Mucosa of descending colon (tissue), 3 donors: ENCODE measurements at regions of chr1 and their contacts with region 1.

Region 1: DNA sequence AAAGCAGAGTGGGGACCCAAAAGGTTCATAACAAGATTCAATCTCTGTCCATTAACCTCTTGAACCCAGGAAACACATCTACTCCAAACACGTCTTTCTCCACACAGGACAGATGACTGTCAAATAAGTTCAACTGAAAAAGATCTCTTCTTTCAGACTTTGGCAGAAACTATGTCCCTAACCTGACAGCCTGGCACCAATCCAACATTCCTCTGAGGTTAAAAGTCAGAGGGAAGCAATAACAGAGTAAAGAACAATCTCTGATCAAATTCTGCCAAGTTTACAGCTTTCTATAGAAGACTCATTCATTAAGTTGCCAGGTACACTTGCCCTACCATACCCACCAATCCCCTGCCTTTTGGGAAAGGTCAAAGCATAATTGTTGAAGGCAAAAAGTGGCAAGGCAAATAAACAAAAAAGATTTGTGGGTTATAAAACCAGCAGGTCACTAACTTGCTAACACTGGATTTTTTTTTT is 31.9 kb downstream of the OTUD7B start:
- DNase-seq: peak in 1 of 3 donors; percentile 54
- ATAC-seq: peak; percentile 53
- H3K4me3 ChIP-seq: no peak overlapping the region
- H3K4me1 ChIP-seq: peaks cover 26% of the 10 kb centered on the region
- CTCF ChIP-seq: no peak

Region 2: GRCh38 chr1:150034336-150034735 is 55.8 kb after region 1 on chr1:
- intact Hi-C with region 1: loop called in 1 of 2 experiments (anchors 10 kb)
- DNase-seq: no peak
- ATAC-seq: no peak
- H3K4me3 ChIP-seq: no peak overlapping the region
- H3K4me1 ChIP-seq: no peaks in the 10 kb centered on the region
- CTCF ChIP-seq: no peak